ENCODE measurements at regions of chr2 and their contacts with region 1.

Region 1: GRCh38 chr2:70190418-70191243 is at the start of gene C2orf42:
- DNase-seq: peak; percentile 99
- ATAC-seq: peak; percentile 87
- H3K4me3 ChIP-seq: peak within 1 kb of the TSS; percentile 72 to 98 (median 80)
- H3K4me3 Mint-ChIP-seq: peak within 1 kb of the TSS; percentile 88
- H3K27ac ChIP-seq: peak within 1 kb of the TSS; percentile 98 to 99
- H3K27ac Mint-ChIP-seq: peak within 1 kb of the TSS; percentile 98
- H3K4me1 ChIP-seq: peaks cover 9 to 11% of the 10 kb centered on the region in 2 donors
- H3K4me1 Mint-ChIP-seq: peaks cover 18% of the 10 kb centered on the region
- H3K27me3 ChIP-seq: no peaks in the 10 kb centered on the region
- H3K27me3 Mint-ChIP-seq: no peaks in the 10 kb centered on the region
- CTCF ChIP-seq: no peak
- total RNA-seq, gene C2orf42: 42.9 and 45.2 TPM in 2 replicates

Region 2: DNA sequence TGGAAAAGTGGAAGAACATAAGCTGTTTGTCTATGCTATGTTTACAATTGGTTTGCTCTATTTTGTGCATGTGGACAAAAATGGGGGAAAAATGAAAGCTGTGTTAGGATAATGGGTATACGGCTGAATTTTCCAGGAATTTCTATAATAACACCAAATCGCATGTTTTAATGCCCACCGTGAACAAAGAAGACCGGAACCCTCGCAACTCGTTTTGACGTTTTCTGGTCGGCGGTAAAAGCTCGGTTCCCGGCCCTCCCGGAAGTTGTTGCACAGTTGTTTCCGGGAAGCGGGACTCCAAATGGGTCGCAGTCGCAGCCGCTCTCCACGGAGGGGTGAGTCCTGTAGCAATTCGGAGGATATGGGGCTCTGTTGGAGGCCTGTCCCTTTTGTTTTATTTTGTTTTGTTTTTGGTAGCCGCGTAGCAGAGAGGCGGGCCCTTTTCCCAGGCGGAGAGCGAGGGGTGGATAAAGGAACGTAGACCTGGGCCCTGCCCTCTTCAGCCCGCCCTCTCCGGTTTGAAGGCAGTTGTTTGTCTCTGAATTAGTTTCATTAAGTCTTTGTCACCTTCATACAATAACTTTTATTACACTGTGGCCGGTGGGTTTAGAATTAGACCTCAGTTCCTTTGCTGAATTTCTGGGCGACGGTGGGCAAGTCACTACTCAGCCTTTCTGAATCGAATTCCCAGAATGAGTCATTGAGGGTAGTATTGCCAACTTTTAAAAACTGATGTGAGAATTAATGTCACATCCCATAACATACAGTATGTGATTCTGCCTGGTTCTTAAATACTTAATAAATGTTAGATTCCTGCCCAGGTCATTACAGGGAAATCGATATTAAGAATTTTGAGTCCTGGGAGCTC is 296.7 kb before region 1 on chr2 and contains the start of gene SNRNP27:
- CTCF ChIA-PET with region 1: interaction called, 8 read pairs
- POLR2A ChIA-PET with region 1: interaction called, 9 read pairs
- intact Hi-C with region 1: loop called (anchors 1 kb)
- DNase-seq: peak; percentile 85
- ATAC-seq: peak; percentile 88
- H3K4me3 ChIP-seq: peak within 1 kb of the TSS; percentile 67 to 96 (median 84)
- H3K4me3 Mint-ChIP-seq: peak within 1 kb of the TSS; percentile 98
- H3K27ac ChIP-seq: peak within 1 kb of the TSS; percentile 57 to 88
- H3K27ac Mint-ChIP-seq: peak within 1 kb of the TSS; percentile 95
- H3K4me1 ChIP-seq: peaks cover 9 to 16% of the 10 kb centered on the region in 2 donors
- H3K4me1 Mint-ChIP-seq: peaks cover 33% of the 10 kb centered on the region
- H3K27me3 ChIP-seq: no peaks in the 10 kb centered on the region
- H3K27me3 Mint-ChIP-seq: no peaks in the 10 kb centered on the region
- CTCF ChIP-seq: no peak
- total RNA-seq, gene SNRNP27: 52.0 and 54.8 TPM in 2 replicates

Region 3: GRCh38 chr2:70070541-70071268 is 119.9 kb before region 1 on chr2:
- CTCF ChIA-PET with region 1: no interaction called
- POLR2A ChIA-PET with region 1: no interaction called
- intact Hi-C with region 1: loop called (anchors 2 kb)
- DNase-seq: peak; percentile 86
- ATAC-seq: peak; percentile 96
- H3K4me3 ChIP-seq: no peak overlapping the region
- H3K4me3 Mint-ChIP-seq: peak overlapping the region; percentile 63
- H3K27ac ChIP-seq: peak overlapping the region; percentile 57 to 79
- H3K27ac Mint-ChIP-seq: peak overlapping the region; percentile 88
- H3K4me1 ChIP-seq: peaks cover 32 to 33% of the 10 kb centered on the region in 2 donors
- H3K4me1 Mint-ChIP-seq: peaks cover 30% of the 10 kb centered on the region
- H3K27me3 ChIP-seq: no peaks in the 10 kb centered on the region
- H3K27me3 Mint-ChIP-seq: no peaks in the 10 kb centered on the region
- CTCF ChIP-seq: peak; percentile 79

Region 4: DNA sequence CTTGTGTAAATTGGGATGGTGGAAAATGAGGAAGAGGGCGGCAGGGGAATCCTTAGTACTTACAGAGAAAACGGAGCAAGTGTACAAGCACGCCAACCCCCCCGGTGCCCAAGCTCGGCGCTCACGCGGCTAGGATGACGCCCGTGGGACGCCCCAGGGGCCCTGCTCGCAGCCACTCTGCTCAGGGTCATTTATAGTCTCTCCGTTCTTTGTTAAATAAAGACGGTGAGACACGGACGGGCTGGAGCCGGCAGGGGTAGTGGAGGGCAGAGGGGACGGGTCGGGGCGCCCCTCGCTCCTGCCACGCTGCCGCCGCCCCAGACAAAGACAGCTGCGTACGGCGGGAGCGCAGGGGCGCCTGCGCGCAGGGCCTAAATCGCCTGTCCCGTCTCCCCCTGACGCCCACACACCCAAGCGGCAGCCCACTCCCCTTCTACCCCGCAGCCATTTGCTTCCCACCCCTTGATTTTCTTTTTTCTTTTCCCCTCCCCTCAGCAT is 65.6 kb before region 1 on chr2:
- CTCF ChIA-PET with region 1: no interaction called
- POLR2A ChIA-PET with region 1: interaction called, 13 read pairs
- intact Hi-C with region 1: no loop called
- DNase-seq: peak; percentile 95
- ATAC-seq: peak; percentile 66
- H3K4me3 ChIP-seq: peak overlapping the region; percentile 32 to 99 (median 71)
- H3K4me3 Mint-ChIP-seq: peak overlapping the region; percentile 95
- H3K27ac ChIP-seq: peak overlapping the region; percentile 100
- H3K27ac Mint-ChIP-seq: peak overlapping the region; percentile 100
- H3K4me1 ChIP-seq: peaks cover 63 to 71% of the 10 kb centered on the region in 2 donors
- H3K4me1 Mint-ChIP-seq: peaks cover 65% of the 10 kb centered on the region
- H3K27me3 ChIP-seq: no peaks in the 10 kb centered on the region
- H3K27me3 Mint-ChIP-seq: no peaks in the 10 kb centered on the region
- CTCF ChIP-seq: no peak

Region 5: DNA sequence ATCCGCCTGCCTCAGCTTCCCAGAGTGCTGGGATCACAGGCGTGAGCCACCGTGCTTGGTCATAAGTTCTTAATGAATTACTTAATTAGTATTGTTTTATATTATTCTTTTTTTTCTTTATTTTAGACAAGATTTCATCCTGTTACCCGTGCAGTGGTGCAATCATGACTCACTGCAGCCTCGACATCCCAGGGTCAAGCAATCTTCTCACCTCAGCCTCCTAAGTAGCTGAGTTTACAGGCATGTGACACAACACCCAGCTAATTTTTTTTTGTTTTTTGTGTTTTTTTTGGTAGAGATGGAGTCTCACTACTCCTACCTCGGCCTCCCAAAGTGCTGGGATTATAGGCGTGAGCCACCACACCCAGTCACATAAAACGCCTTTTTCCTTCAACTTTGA is 17.1 kb before region 1 on chr2:
- CTCF ChIA-PET with region 1: no interaction called
- POLR2A ChIA-PET with region 1: interaction called, 13 read pairs
- intact Hi-C with region 1: no loop called
- DNase-seq: no peak
- ATAC-seq: no peak
- H3K4me3 ChIP-seq: no peak overlapping the region
- H3K4me3 Mint-ChIP-seq: no peak overlapping the region
- H3K27ac ChIP-seq: no peak overlapping the region
- H3K27ac Mint-ChIP-seq: no peak overlapping the region
- H3K4me1 ChIP-seq: no peaks in the 10 kb centered on the region
- H3K4me1 Mint-ChIP-seq: no peaks in the 10 kb centered on the region
- H3K27me3 ChIP-seq: no peaks in the 10 kb centered on the region
- H3K27me3 Mint-ChIP-seq: no peaks in the 10 kb centered on the region
- CTCF ChIP-seq: no peak

Region 6: DNA sequence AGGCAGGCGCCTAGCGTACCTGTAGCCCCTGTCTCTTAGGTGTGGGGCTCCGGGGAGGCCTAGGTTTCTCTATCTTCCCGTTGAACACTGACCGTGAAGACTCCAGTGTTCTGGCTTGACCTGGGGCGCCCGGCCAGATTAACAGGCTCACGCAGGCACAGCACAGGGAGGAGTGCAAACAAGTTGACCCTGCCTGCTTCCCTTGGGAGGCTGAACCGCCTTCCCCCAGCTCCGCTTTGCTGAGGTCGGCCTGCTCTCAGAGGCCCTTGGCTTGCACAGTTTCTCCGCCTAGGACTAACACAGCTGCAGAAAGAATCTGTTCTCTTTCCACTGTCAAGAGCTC is 67.9 kb after region 1 on chr2:
- CTCF ChIA-PET with region 1: no interaction called
- POLR2A ChIA-PET with region 1: interaction called, 14 read pairs
- intact Hi-C with region 1: loop called (anchors 2 kb)
- DNase-seq: no peak
- ATAC-seq: no peak
- H3K4me3 ChIP-seq: peak overlapping the region in 4 of 5 experiments; percentile 54 to 81 (median 70)
- H3K4me3 Mint-ChIP-seq: peak overlapping the region; percentile 97
- H3K27ac ChIP-seq: peak overlapping the region in 1 of 2 donors; percentile 14
- H3K27ac Mint-ChIP-seq: peak overlapping the region; percentile 90
- H3K4me1 ChIP-seq: peaks cover 6 to 12% of the 10 kb centered on the region in 2 donors
- H3K4me1 Mint-ChIP-seq: peaks cover 18% of the 10 kb centered on the region
- H3K27me3 ChIP-seq: no peaks in the 10 kb centered on the region
- H3K27me3 Mint-ChIP-seq: no peaks in the 10 kb centered on the region
- CTCF ChIP-seq: no peak

Region 7: DNA sequence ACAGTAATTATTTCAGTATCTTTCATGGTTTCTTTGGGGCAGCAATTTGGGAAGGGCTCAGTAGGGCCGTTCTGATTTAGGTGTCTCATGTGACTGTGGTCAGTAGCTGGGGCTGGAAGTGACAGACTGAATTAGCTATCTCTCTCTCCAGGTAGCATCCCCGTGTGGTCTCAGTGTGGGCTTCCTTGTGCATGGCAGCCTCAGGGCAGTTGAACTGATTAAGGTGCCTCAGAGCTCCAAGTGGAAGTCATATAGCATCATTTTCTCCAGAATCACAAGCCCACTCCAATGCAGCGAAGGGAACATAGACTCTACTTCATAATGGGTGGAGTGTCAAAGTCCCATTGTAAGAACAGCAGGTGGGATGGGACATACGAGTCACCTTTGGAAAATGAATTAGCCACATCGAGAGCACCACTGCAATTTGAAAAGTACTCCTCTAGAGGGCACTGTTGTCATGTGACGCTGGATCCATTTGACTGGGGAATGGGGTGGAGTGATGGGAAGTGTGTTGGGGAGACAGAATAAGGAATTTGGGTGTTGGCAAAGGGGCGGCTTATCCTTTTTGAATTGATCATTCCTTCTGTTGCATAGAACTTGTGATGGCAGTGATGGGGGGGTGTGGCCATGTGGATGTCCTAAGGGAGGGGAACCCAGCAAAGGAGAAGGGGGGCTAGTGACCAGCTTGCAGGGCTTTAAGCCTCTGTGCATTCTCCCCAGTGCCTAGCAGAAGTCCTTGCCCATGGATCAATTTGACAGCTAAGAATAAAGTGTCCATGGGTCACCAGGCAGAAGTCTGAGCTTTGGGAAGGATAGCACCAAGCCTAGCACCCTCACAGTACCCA is 150.5 kb after region 1 on chr2:
- CTCF ChIA-PET with region 1: no interaction called
- POLR2A ChIA-PET with region 1: no interaction called
- intact Hi-C with region 1: no loop called
- DNase-seq: peak; percentile 56
- ATAC-seq: no peak
- H3K4me3 ChIP-seq: no peak overlapping the region
- H3K4me3 Mint-ChIP-seq: no peak overlapping the region
- H3K27ac ChIP-seq: no peak overlapping the region
- H3K27ac Mint-ChIP-seq: no peak overlapping the region
- H3K4me1 ChIP-seq: peaks cover 0 to 4% of the 10 kb centered on the region in 2 donors
- H3K4me1 Mint-ChIP-seq: no peaks in the 10 kb centered on the region
- H3K27me3 ChIP-seq: peaks cover 0 to 21% (median 1%) of the 10 kb centered on the region in 4 experiments
- H3K27me3 Mint-ChIP-seq: peaks cover 33% of the 10 kb centered on the region
- CTCF ChIP-seq: peak; percentile 78

Region 8: GRCh38 chr2:71049365-71050360 is 859.0 kb after region 1 on chr2:
- CTCF ChIA-PET with region 1: no interaction called
- POLR2A ChIA-PET with region 1: no interaction called
- intact Hi-C with region 1: no loop called
- DNase-seq: peak; percentile 67
- ATAC-seq: peak; percentile 47
- H3K4me3 ChIP-seq: no peak overlapping the region
- H3K4me3 Mint-ChIP-seq: no peak overlapping the region
- H3K27ac ChIP-seq: no peak overlapping the region
- H3K27ac Mint-ChIP-seq: no peak overlapping the region
- H3K4me1 ChIP-seq: peaks cover 0 to 3% of the 10 kb centered on the region in 2 donors
- H3K4me1 Mint-ChIP-seq: peaks cover 3% of the 10 kb centered on the region
- H3K27me3 ChIP-seq: peaks cover 0 to 3% (median 0%) of the 10 kb centered on the region in 4 experiments
- H3K27me3 Mint-ChIP-seq: peaks cover 6% of the 10 kb centered on the region
- CTCF ChIP-seq: peak; percentile 38